Right ventricle myocardium superior (tissue), 1 donor: ENCODE measurements at regions of chr7 and their contacts with region 1.

Region 1: GRCh38 chr7:80699045-80699638 is 60.7 kb downstream of the CD36 start:
- DNase-seq: no peak
- ATAC-seq: peak; percentile 87

Region 2: DNA sequence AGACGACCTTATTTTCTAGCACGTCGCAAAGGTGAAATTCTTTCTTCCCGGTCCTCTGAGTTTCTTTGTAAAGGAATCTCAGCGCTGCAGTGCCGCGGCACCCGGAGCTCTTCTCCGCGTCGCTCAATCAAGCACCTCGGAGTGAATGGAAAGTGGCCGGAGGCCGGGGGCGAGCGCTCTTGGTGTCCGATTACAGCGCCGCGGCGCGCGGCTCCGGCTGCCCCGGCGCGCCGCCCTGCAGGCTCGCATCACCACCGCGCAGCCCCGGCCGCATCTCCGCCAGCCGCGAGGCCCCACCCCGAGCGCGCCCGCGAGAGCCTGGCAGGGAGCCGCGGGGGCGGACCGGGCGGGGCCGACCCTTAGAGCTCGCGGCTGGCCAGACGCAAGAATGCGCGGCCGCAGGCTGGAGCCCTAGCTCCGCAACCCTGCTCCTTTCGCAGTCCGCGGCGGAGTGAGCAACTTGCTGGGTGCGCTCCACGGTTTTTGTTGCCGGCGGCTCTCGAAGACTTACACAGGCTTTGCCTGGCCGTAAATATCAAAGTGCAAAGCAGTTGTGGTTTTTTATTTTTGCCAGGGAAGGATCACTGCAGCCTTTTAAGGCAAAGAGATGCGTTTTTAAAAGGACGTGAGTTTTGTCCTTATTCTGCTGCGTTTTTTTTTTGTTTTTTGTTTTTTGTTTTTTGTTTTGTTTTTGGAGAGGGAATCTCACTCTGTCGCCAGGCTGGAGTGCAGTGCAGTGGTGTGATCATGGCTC is 219.9 kb after region 1 on chr7 and contains the start of gene SEMA3C:
- intact Hi-C with region 1: loop called (anchors 10 kb)
- DNase-seq: peak; percentile 95
- ATAC-seq: peak; percentile 98
- total RNA-seq, gene SEMA3C: 66.9 TPM

Region 3: DNA sequence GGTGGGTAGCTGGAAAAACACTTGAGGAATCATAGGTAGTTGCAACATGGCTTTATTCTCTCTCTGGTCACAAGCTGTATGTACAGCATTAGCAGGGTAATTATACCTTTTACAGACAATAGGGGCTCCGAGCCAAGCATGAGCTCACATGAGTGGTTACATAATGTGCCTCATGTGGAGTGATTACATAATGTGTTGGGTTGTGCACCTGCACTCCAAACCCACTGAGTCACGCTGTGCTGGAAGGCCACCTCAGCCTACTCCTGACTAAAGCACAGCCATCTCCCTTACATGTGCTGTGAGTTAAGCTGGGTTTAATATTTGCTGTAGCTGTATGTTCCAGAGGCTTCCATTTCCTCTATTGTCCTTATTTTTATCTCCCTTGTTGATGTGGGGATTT is 568.4 kb after region 1 on chr7:
- intact Hi-C with region 1: loop called (anchors 10 kb)
- DNase-seq: no peak
- ATAC-seq: no peak

Region 4: DNA sequence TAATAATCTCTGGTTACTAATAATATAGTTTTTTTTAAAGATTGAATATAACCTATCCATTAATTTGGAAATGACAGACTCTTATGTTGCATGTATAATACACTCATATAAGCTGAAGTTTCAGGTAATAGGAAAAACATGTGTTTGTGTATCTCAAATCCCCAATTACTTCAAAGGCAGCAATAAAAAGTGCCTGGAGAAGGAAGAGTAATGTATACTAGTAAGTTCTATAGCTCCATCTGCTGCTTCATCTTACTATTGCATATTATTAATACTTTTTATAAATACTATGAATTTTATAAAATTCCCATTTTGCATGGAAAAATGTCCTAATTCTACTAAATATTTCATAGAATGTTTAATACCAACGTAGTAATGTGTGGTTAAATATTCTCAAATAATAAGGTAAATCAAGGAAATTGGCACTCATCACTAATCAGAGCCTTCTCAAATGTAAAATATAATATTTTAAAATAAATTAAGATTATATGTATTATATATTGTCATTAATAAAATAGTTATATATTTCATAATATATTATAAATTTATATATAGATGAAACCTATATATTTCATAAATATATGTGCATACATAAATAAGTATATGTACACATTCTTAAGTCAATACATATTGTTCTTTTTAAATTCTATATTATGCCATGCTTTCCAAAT is 758.8 kb after region 1 on chr7:
- intact Hi-C with region 1: loop called (anchors 5 kb)
- DNase-seq: no peak
- ATAC-seq: no peak

Region 5: GRCh38 chr7:81469869-81470723 is 771.0 kb after region 1 on chr7:
- intact Hi-C with region 1: loop called (anchors 5 kb)
- DNase-seq: peak; percentile 49
- ATAC-seq: peak; percentile 90